ENCODE measurements at regions of chr21 and their contacts with region 1.

Region 1: DNA sequence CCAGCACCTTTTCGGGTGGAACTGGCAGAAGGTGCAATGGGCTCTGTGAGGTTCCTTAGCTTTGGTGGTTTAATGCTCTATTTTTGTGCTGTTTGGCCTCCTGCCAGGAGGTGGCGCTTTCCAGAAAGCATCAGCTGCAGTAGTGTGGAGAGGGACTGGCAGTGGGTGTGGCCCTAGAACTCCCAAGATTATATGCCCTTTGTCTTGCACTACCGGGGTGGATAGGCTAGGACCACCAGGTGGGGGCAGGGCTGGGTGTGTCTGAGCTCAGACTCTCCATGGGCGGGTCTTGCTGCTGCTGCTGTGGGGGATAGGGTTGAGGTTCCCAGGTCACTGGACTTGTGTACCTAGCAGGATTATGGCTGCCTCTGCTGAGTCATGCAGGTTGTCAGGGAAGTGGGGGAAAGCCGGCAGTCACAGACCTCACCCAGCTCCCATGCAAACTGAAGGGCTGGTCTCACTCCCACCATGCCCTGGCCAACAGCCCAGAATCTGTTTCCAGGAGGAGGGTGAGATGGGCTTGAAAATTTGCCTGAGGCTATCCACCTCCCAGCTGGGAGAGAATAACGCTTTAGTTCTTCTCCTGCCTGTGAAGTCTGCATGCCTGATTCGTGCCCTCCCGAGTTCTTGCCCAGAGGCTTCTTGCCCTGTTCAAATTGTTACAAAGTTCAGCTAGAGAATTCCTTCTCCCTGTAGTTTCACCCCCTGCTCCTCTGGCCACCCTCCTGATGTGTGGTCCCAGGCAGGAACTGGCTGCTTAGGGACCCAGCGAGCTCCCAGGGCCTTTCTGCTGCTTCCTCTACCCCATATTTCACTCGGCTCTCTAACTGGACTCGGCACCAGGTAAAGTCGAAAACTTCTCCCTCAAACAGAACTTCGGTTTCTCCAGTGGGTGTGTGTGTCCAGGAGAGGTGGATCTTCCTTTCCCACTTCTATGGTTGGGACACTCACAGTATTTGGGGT is 76.5 kb upstream of the BTG3 start:
- DNase-seq: peak; percentile 11 to 47 (median 37)
- ATAC-seq: no peak
- H3K4me3 ChIP-seq: no peak overlapping the region
- H3K4me3 Mint-ChIP-seq: peak overlapping the region in 2 of 10 donors; percentile 10 to 33
- H3K27ac ChIP-seq: no peak overlapping the region
- H3K27ac Mint-ChIP-seq: peak overlapping the region in 2 of 9 donors; percentile 38 to 40
- H3K4me1 ChIP-seq: peaks cover 0 to 6% of the 10 kb centered on the region in 2 donors
- H3K4me1 Mint-ChIP-seq: peaks cover 14 to 42% (median 36%) of the 10 kb centered on the region in 7 donors
- H3K27me3 ChIP-seq: no peaks in the 10 kb centered on the region
- H3K27me3 Mint-ChIP-seq: peaks cover 0 to 2% (median 0%) of the 10 kb centered on the region in 5 donors

Region 2: GRCh38 chr21:17708522-17709265 is 19.5 kb after region 1 on chr21:
- CTCF ChIA-PET with region 1: no interaction called
- POLR2A ChIA-PET with region 1: no interaction called
- intact Hi-C with region 1: loop called in 1 of 2 experiments (anchors 1 kb)
- DNase-seq: no peak
- ATAC-seq: no peak
- H3K4me3 ChIP-seq: no peak overlapping the region
- H3K4me3 Mint-ChIP-seq: peak overlapping the region in 1 of 10 donors; percentile 18
- H3K27ac ChIP-seq: no peak overlapping the region
- H3K27ac Mint-ChIP-seq: no peak overlapping the region
- H3K4me1 ChIP-seq: no peaks in the 10 kb centered on the region
- H3K4me1 Mint-ChIP-seq: peaks cover 0 to 29% (median 0%) of the 10 kb centered on the region in 7 donors
- H3K27me3 ChIP-seq: no peaks in the 10 kb centered on the region
- H3K27me3 Mint-ChIP-seq: no peaks in the 10 kb centered on the region

Region 3: DNA sequence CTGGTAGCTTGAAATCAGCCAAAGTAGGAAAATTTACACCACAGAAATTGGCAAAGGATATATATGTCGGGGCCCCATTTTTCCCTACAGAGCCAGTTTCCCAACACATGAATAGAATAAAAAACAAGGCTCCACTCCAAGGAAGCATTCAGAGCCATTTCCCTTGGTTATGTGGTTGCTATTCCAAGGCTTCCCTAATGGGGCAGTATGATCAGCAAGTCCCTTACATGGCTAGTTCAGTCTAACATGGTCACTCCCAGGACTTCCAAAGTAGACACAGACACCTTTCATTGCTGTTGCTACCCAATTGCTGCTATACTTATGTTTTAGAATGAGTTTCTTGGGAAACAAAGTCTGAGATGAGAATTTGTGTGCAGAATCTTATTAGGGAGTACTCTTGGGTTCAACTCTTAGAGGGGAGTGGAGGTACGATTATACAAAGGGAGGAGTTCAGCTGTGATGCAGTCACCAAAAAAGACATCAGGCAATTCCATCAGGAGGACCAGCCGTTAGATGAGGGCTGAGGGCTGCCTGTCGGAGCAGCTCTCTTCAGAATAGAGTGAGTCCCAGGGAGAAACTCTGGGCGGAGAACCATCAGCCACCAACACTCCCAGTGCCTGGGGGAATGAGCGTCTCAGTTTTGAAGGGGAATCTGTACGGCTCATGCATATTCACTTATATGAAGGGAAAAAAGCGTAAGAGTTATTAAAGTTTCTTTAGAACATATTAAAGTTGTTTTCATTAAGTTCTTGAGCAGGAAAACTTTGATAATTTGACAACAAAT is 37.0 kb after region 1 on chr21:
- CTCF ChIA-PET with region 1: no interaction called
- POLR2A ChIA-PET with region 1: no interaction called
- intact Hi-C with region 1: loop called in 1 of 2 experiments (anchors 5 kb)
- DNase-seq: no peak
- ATAC-seq: no peak
- H3K4me3 ChIP-seq: no peak overlapping the region
- H3K4me3 Mint-ChIP-seq: no peak overlapping the region
- H3K27ac ChIP-seq: no peak overlapping the region
- H3K27ac Mint-ChIP-seq: no peak overlapping the region
- H3K4me1 ChIP-seq: no peaks in the 10 kb centered on the region
- H3K4me1 Mint-ChIP-seq: peaks cover 0 to 6% (median 0%) of the 10 kb centered on the region in 7 donors
- H3K27me3 ChIP-seq: no peaks in the 10 kb centered on the region
- H3K27me3 Mint-ChIP-seq: peaks cover 0 to 2% (median 0%) of the 10 kb centered on the region in 5 donors

Region 4: GRCh38 chr21:17738191-17738958 is 49.2 kb after region 1 on chr21:
- CTCF ChIA-PET with region 1: no interaction called
- POLR2A ChIA-PET with region 1: no interaction called
- intact Hi-C with region 1: no loop called
- DNase-seq: no peak
- ATAC-seq: no peak
- H3K4me3 ChIP-seq: no peak overlapping the region
- H3K4me3 Mint-ChIP-seq: no peak overlapping the region
- H3K27ac ChIP-seq: no peak overlapping the region
- H3K27ac Mint-ChIP-seq: no peak overlapping the region
- H3K4me1 ChIP-seq: no peaks in the 10 kb centered on the region
- H3K4me1 Mint-ChIP-seq: peaks cover 0 to 5% (median 0%) of the 10 kb centered on the region in 7 donors
- H3K27me3 ChIP-seq: no peaks in the 10 kb centered on the region
- H3K27me3 Mint-ChIP-seq: no peaks in the 10 kb centered on the region

Region 5: DNA sequence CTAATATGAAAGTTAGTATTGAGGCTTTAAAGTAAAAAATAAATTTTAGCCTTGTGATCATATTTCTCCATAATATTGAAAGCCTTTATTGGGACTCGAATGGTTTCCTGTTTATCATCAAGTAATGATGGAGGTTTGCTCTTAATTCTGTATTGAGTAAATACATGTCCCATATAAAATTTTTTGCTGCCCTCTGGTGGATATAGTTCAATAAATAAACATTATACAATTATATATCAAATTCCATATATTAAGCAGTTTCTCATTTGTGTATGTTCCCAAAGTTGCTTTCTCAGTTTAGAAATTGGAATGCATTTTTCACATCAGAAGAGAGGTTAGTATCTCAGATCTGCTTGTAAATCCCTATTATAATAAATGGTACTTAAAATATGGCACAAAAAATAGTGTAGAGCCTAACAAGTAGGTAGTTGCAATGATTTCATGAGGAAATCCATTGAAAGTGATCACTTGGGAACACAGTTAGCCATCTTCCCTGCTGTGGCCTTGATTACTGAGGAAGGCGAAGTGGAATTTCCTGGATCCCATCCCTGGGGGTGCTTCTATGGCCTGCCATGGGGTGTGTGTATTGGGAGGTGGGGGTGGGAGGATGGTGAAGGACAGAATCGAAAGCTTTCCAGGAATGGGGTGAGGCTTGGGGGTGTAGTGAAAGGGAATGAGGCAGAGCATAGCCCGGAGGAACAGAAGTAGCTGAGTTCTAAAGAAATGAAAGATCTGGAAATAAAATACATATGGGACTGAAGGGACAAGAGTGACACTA is 214.0 kb after region 1 on chr21:
- CTCF ChIA-PET with region 1: interaction called, 7 read pairs
- POLR2A ChIA-PET with region 1: no interaction called
- intact Hi-C with region 1: loop called in 1 of 2 experiments (anchors 2 kb)
- DNase-seq: peak in 7 of 9 donors; percentile 10 to 58 (median 37)
- ATAC-seq: peak; percentile 79
- H3K4me3 ChIP-seq: no peak overlapping the region
- H3K4me3 Mint-ChIP-seq: no peak overlapping the region
- H3K27ac ChIP-seq: no peak overlapping the region
- H3K27ac Mint-ChIP-seq: no peak overlapping the region
- H3K4me1 ChIP-seq: no peaks in the 10 kb centered on the region
- H3K4me1 Mint-ChIP-seq: peaks cover 0 to 12% (median 3%) of the 10 kb centered on the region in 7 donors
- H3K27me3 ChIP-seq: no peaks in the 10 kb centered on the region
- H3K27me3 Mint-ChIP-seq: peaks cover 0 to 5% (median 0%) of the 10 kb centered on the region in 5 donors

Measured in naive thymus-derived CD4-positive, alpha-beta T cell (primary cell).